Common myeloid progenitor, CD34-positive (primary cell): ENCODE measurements at regions of chr12 and their contacts with region 1.

Region 1: DNA sequence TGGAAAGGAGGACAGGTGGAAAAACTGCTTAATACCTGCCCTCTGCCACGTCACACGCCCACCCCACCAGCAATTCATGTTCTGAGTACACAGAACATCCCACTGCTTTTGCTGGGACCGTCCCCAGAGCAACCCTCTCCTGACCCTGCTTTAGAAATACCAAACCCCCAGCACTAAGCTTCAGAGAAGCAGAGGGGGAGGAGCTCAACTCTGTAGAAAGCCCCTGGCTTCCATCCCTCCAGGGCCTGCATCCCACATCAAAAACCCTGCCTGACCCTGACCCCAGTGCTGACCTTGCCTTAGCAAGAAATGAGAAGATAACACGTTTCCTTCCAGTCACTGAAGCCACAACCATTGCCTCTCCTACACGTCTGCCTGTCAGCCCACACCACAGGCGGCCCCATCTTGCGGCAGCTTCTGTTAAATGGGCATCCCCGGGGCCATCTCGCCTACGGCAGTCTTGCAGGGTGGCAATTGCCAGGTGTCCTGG is 19.7 kb downstream of the VDR start:
- DNase-seq: no peak
- H3K4me3 ChIP-seq: no peak overlapping the region
- H3K27ac ChIP-seq: no peak overlapping the region
- H3K4me1 ChIP-seq: peaks cover 0 to 22% (median 19%) of the 10 kb centered on the region in 4 experiments
- H3K27me3 ChIP-seq: no peaks in the 10 kb centered on the region

Region 2: DNA sequence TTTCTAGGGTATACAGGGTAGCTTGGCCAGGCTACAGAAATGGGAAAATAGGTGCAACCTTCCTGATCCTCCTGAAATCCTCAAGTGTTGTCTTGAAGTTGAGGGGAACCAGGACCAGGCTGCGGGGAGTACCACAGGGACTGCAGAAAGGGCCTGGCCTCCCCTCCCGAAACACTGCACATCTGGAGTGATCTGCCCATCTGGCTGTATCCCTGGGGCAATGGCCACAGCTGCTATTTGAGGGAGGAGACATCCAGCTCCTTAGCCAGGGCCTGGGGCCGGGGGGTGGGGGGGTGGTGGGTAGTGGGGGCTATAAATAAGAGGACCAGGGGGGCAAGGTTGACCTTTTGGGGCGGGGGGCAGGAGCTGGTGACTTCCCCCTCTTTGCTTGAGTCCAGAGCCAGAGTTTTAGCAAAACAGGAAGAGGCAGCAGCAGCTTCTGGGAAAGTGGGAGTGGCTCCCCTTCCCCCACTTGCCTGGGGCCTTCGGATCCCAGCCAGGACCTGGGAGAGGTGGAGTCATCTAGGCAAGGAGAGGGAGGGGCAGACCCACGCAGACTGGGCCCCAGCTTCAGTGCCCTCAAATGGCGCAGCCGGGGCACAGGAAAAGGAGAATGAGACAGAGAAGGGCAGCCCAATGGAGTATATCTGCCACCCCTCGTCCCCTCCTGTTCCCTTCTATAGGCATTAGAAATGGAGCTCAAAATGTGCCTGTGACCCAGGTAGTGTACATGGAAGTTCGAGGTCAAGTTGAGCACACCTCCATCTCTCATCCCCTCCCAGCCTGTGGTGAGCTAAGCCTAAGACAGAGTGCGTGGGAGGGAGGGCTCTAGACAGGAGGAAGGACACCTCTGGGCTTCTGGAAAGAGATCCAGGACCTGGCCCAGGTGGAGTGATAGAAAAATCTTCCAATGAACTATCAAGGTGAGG is 56.2 kb before region 1 on chr12:
- CTCF ChIA-PET with region 1: no interaction called
- POLR2A ChIA-PET with region 1: no interaction called
- DNase-seq: no peak
- H3K4me3 ChIP-seq: peak overlapping the region in 1 of 7 experiments; percentile 2
- H3K27ac ChIP-seq: peak overlapping the region in 1 of 2 experiments; percentile 49
- H3K4me1 ChIP-seq: peaks cover 2 to 54% (median 43%) of the 10 kb centered on the region in 4 experiments
- H3K27me3 ChIP-seq: no peaks in the 10 kb centered on the region

Region 3: DNA sequence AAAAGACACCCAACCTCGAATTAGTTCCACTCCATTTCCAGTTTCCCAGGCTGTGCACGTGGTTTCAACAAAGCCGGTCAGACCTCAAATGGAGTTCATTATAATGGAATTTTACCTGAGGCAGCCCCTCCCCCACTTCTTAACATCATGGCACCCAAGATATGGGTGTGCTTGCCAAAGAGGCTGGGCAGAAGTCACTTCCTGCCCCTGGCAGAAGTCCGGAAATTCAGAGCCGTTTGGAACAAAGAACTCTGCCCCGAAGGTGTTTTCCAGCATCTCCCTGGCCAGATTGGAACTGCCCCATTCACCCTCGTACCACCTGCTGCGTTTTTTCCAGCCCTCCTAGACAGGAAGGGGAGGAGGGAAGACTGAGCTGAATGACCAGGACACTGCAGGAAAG is 11.6 kb after region 1 on chr12:
- CTCF ChIA-PET with region 1: interaction called, 15 read pairs
- POLR2A ChIA-PET with region 1: interaction called, 4 read pairs
- DNase-seq: no peak
- H3K4me3 ChIP-seq: no peak overlapping the region
- H3K27ac ChIP-seq: no peak overlapping the region
- H3K4me1 ChIP-seq: peaks cover 8 to 28% (median 23%) of the 10 kb centered on the region in 4 experiments
- H3K27me3 ChIP-seq: no peaks in the 10 kb centered on the region

Region 4: DNA sequence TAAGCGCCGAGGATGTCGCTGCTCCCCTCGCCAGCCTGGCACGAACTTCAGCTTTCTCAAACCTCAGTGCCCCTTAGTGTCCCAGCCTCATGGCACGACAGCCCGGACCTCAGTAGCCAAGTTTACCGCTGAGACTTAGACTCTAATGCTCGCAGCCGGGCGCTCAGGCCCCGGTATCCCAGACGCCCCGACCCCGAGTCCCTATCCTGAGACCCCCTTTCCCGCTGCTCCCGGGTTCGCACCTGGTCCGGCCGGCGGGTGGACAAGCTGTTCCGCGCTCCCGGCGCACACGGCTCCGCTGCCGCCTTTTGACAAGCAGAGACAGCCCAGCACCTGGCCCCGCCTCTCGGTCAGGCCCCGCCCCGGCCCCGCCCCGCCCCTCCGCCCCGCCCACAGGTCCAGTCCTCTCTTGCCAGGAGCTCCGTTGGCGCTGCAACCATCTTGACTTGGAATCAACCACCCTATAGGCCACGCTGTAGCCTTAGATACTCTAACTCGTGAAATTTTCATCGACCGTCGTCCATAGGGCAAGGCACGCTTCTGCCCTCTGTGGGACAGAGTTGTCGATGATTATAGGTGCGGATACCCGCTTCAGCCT is 19.8 kb after region 1 on chr12 and contains the start of gene VDR:
- CTCF ChIA-PET with region 1: interaction called, 10 read pairs
- POLR2A ChIA-PET with region 1: no interaction called
- DNase-seq: peak; percentile 82 to 87 (median 84)
- H3K4me3 ChIP-seq: peak within 1 kb of the TSS; percentile 52 to 82 (median 71)
- H3K27ac ChIP-seq: no peak within 1 kb of the TSS
- H3K4me1 ChIP-seq: peaks cover 14 to 57% (median 46%) of the 10 kb centered on the region in 4 experiments
- H3K27me3 ChIP-seq: peaks cover 6 to 28% (median 21%) of the 10 kb centered on the region in 5 experiments